SK-N-SH (cell line): ENCODE measurements at regions of chr1 and their contacts with region 1.

Region 1: GRCh38 chr1:67347688-67348472 is 40.2 kb downstream of the IL12RB2 start:
- DNase-seq: peak; percentile 62
- H3K4me3 ChIP-seq: no peak overlapping the region
- H3K27ac ChIP-seq: no peak overlapping the region
- H3K4me1 ChIP-seq: no peaks in the 10 kb centered on the region
- H3K27me3 ChIP-seq: no peaks in the 10 kb centered on the region
- CTCF ChIP-seq: peak; percentile 86
- EP300 ChIP-seq: no peak
- RAD21 ChIP-seq: peak; percentile 84

Region 2: GRCh38 chr1:67367370-67368045 is 19.6 kb after region 1 on chr1:
- CTCF ChIA-PET with region 1: interaction called, 26 read pairs
- POLR2A ChIA-PET with region 1: no interaction called
- DNase-seq: peak; percentile 78
- H3K4me3 ChIP-seq: no peak overlapping the region
- H3K27ac ChIP-seq: no peak overlapping the region
- H3K4me1 ChIP-seq: peaks cover 6 to 9% of the 10 kb centered on the region in 2 experiments; a peak in 2 of 4 replicates
- H3K27me3 ChIP-seq: no peaks in the 10 kb centered on the region
- CTCF ChIP-seq: peak; percentile 31; the same call in 1 of the 2 replicates
- EP300 ChIP-seq: no peak
- RAD21 ChIP-seq: peak; percentile 21; the same call in 1 of the 2 replicates